ENCODE measurements at regions of chr5 and their contacts with region 1.

Region 1: GRCh38 chr5:54646356-54647101 is 129.0 kb downstream of the SNX18 start:
- DNase-seq: peak; percentile 95
- ATAC-seq: peak; percentile 93
- H3K4me3 Mint-ChIP-seq: peak overlapping the region; percentile 53
- H3K27ac Mint-ChIP-seq: peak overlapping the region; percentile 97
- H3K4me1 Mint-ChIP-seq: peaks cover 51% of the 10 kb centered on the region
- H3K27me3 Mint-ChIP-seq: no peaks in the 10 kb centered on the region

Region 2: GRCh38 chr5:54570916-54571315 is 75.6 kb before region 1 on chr5:
- CTCF ChIA-PET with region 1: no interaction called
- DNase-seq: no peak
- ATAC-seq: no peak
- H3K4me3 Mint-ChIP-seq: no peak overlapping the region
- H3K27ac Mint-ChIP-seq: no peak overlapping the region
- H3K4me1 Mint-ChIP-seq: peaks cover 10% of the 10 kb centered on the region
- H3K27me3 Mint-ChIP-seq: no peaks in the 10 kb centered on the region

Region 3: DNA sequence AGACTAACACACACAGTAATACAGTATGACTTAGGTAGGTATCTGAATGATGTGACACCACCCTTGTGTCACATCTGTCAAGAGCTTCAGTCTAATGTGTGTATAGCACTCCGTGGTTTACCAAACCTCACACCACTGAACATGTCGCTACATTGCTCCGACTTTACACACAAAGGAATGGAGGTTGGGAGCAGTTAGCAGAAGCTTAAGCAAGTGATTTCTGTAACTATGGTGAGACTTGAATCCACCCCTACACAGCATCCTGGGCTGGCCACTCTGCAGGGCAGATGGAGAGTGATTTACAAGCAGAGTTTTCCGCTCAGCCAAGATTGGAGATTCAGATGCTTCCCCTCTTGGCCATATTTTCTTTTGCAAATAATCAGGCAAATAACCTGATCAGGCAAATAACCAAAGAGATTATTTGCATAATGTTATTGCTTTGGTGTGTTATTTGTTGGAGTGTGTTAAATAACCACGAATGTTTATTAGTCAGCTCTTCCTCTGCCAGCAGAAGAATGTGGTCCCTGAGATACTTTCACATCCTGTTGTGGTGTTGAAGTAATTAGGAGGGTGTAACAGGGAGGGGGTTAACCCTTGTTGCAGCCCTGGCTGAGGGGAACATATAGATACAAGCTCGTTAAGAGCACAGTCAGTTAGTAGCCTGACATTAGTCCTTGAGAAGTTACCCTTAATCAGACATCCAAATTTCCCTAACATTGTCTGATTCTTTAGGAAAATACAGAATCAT is 36.2 kb before region 1 on chr5:
- CTCF ChIA-PET with region 1: interaction called, 16 read pairs
- DNase-seq: peak; percentile 87
- ATAC-seq: peak; percentile 92
- H3K4me3 Mint-ChIP-seq: peak overlapping the region; percentile 38
- H3K27ac Mint-ChIP-seq: peak overlapping the region; percentile 93
- H3K4me1 Mint-ChIP-seq: peaks cover 31% of the 10 kb centered on the region
- H3K27me3 Mint-ChIP-seq: no peaks in the 10 kb centered on the region

Region 4: GRCh38 chr5:54620548-54620933 is 26.0 kb before region 1 on chr5:
- CTCF ChIA-PET with region 1: no interaction called
- DNase-seq: no peak
- ATAC-seq: no peak
- H3K4me3 Mint-ChIP-seq: no peak overlapping the region
- H3K27ac Mint-ChIP-seq: peak overlapping the region; percentile 31
- H3K4me1 Mint-ChIP-seq: peaks cover 15% of the 10 kb centered on the region
- H3K27me3 Mint-ChIP-seq: no peaks in the 10 kb centered on the region

Region 5: DNA sequence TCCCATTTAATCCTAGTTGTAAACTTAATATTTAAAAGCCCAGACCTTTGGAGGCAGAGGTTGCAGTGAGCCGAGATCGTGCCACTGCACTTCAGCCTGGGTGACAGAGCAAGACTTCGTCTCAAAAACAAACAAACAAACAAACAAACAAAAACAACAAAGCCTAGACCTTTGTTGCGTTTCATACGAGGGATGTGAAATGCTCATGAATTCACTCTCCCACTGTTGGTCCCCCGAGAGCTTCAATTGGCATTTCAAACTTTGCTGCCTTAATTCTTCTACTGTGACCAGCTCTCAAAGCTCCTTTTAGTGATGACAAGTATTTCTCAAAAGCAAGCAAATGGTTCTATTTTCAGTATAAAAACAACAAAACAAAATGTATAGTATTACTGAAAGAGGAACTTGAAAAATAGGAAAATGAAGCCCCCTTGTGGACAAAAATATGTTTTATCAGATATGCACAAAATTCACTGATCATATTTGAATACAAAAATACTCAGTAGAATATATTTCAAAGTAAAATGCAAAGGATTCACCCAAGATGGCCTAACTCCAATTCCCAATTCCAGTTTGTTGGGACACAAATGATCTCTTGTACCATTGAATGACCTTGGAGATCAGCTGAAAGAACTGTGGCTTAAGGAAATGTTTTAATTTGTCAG is 198.5 kb after region 1 on chr5:
- CTCF ChIA-PET with region 1: interaction called, 10 read pairs
- DNase-seq: no peak
- ATAC-seq: peak; percentile 69
- H3K4me3 Mint-ChIP-seq: no peak overlapping the region
- H3K27ac Mint-ChIP-seq: no peak overlapping the region
- H3K4me1 Mint-ChIP-seq: peaks cover 18% of the 10 kb centered on the region
- H3K27me3 Mint-ChIP-seq: peaks cover 16% of the 10 kb centered on the region

Measured in activated CD8-positive, alpha-beta memory T cell treated with anti-CD3 and anti-CD28 coated beads, Interleukin-2, amount 10 ng/mL, durations not matched to agents 7 days and 5 days (primary cell).